CD4-positive, alpha-beta T cell (primary cell): ENCODE measurements at regions of chr2 and their contacts with region 1.

Region 1: DNA sequence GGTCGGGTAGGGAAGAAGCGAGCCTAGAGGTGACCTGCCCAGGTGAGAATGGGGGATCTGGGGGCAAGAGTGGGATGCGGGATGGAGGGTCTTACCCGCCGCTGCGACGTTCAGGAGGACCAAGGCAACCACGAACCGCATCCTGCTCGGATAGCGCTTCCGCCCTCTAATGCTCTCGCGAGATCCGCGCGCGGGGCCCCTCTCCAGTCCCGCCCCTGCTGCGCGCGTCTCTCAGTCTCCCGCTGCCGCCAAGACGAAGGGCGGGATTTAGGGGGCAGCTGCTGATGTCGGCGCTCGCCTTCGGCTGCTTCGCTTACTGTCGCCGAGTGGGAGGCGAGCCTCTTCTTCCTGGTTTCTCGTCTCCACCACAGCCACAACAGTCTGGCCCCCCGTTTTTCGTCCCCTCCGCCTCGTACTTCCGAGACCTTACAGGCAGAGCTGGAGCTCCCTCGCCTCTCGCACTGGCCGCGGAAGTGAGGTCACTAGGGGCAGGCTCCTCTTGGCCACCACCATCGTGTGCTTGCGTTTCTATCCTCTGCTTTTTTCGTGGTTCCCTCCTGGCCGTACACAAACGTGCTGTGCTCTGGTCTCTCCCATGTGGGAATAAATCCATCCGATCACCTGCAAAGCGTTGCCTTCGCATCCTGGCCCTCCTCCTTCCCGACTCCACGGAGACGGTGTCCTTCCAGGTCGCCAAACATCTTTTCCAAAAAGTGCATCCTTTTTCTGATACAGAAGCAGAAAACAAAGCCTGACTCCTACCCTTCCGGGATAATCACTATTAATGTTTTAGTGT is at the start of gene TGOLN2:
- DNase-seq: peak; percentile 88 to 96 (median 94)
- ATAC-seq: peak; percentile 84
- H3K4me3 ChIP-seq: peak within 1 kb of the TSS; percentile 89
- H3K4me3 Mint-ChIP-seq: peak within 1 kb of the TSS; percentile 96
- H3K27ac ChIP-seq: peak within 1 kb of the TSS; percentile 95 to 97
- H3K27ac Mint-ChIP-seq: peak within 1 kb of the TSS; percentile 97
- H3K4me1 ChIP-seq: peaks cover 35% of the 10 kb centered on the region
- H3K4me1 Mint-ChIP-seq: peaks cover 54% of the 10 kb centered on the region
- H3K27me3 ChIP-seq: no peaks in the 10 kb centered on the region
- H3K27me3 Mint-ChIP-seq: no peaks in the 10 kb centered on the region
- CTCF ChIP-seq: no peak
- total RNA-seq, gene TGOLN2: 172 to 175 TPM

Region 2: GRCh38 chr2:84970868-84971509 is 357.0 kb before region 1 on chr2 and contains the start of gene KCMF1:
- CTCF ChIA-PET with region 1: no interaction called
- POLR2A ChIA-PET with region 1: interaction called, 11 read pairs
- intact Hi-C with region 1: no loop called
- DNase-seq: peak; percentile 44 to 82 (median 63)
- ATAC-seq: peak; percentile 49
- H3K4me3 ChIP-seq: peak within 1 kb of the TSS; percentile 99
- H3K4me3 Mint-ChIP-seq: peak within 1 kb of the TSS; percentile 99
- H3K27ac ChIP-seq: peak within 1 kb of the TSS; percentile 84 to 91
- H3K27ac Mint-ChIP-seq: peak within 1 kb of the TSS; percentile 98
- H3K4me1 ChIP-seq: peaks cover 28% of the 10 kb centered on the region
- H3K4me1 Mint-ChIP-seq: peaks cover 61% of the 10 kb centered on the region
- H3K27me3 ChIP-seq: no peaks in the 10 kb centered on the region
- H3K27me3 Mint-ChIP-seq: no peaks in the 10 kb centered on the region
- CTCF ChIP-seq: no peak
- total RNA-seq, gene KCMF1: 72.4 to 78.0 TPM

Region 3: DNA sequence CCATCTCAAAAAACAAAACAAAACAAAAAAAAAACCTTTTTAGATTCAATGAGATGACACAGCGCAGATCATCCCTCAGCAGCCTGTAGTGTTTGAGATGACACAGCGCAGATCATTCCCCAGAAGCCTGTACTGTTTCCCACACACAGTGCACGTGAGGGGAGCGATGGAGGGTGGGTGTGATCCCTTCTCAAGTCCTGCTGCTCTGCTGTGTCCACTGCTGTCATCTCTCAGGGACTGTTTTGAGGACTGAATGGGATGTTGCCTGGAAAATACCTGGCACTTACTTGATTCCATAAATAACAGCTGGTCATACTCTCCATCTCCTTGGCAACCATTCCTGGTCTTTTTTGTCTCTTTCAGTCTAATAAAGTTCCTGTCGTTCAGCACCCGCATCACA is 25.9 kb before region 1 on chr2:
- CTCF ChIA-PET with region 1: interaction called, 5 read pairs
- POLR2A ChIA-PET with region 1: interaction called, 24 read pairs
- intact Hi-C with region 1: no loop called
- DNase-seq: no peak
- ATAC-seq: no peak
- H3K4me3 ChIP-seq: no peak overlapping the region
- H3K4me3 Mint-ChIP-seq: no peak overlapping the region
- H3K27ac ChIP-seq: no peak overlapping the region
- H3K27ac Mint-ChIP-seq: no peak overlapping the region
- H3K4me1 ChIP-seq: peaks cover 16% of the 10 kb centered on the region
- H3K4me1 Mint-ChIP-seq: peaks cover 13% of the 10 kb centered on the region
- H3K27me3 ChIP-seq: no peaks in the 10 kb centered on the region
- H3K27me3 Mint-ChIP-seq: peaks cover 4% of the 10 kb centered on the region
- CTCF ChIP-seq: no peak

Region 4: DNA sequence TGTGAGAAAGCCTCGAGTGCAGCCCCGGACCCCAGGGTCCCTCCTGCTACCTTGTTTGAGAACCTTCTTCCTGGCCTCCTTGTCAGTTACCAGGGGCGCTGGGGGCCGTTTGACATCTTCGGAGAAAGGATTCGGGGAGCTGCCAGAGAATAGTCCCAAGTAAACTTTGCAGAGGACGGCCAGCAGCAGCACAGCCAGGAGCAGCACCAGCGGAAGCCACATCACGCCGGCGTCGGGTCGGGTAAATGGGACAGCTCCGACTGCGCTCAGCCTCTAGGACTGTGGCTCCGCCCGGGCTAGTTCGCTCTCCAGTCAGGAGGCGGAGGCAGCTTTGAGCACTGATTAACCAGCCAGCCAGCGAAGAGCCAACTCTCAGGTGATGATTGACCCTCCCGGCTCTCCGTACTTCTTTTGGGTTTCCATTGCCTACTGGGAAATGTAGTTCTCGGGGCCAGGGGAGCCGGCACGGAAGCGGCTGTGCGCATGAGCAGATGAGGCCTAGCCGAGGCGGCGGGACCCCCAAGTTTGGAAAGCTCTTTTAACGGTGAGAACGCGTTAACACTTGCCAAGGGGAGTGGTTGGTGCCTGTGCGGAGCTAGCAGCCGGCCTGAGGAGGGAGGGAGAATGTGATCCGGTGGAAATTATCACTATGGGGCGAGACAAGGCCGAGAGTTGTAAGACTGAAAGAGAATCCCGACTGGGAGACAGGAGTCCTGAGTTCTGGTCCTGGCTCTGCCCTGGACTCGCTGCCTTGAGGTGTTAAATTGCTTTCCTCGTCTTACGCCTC is 26.5 kb after region 1 on chr2 and contains the starts of genes ELMOD3 and RETSAT:
- CTCF ChIA-PET with region 1: interaction called, 3 read pairs
- POLR2A ChIA-PET with region 1: interaction called, 216 read pairs
- intact Hi-C with region 1: loop called (anchors 1 kb)
- DNase-seq: peak; percentile 89 to 99 (median 94)
- ATAC-seq: peak; percentile 98
- H3K4me3 ChIP-seq: peak within 1 kb of the TSS; percentile 68
- H3K4me3 Mint-ChIP-seq: peak within 1 kb of the TSS; percentile 99
- H3K27ac ChIP-seq: peak within 1 kb of the TSS; percentile 75
- H3K27ac Mint-ChIP-seq: peak within 1 kb of the TSS; percentile 94
- H3K4me1 ChIP-seq: peaks cover 44% of the 10 kb centered on the region
- H3K4me1 Mint-ChIP-seq: peaks cover 63% of the 10 kb centered on the region
- H3K27me3 ChIP-seq: no peaks in the 10 kb centered on the region
- H3K27me3 Mint-ChIP-seq: no peaks in the 10 kb centered on the region
- CTCF ChIP-seq: no peak
- total RNA-seq, gene ELMOD3: 13.5 to 15.3 TPM
- total RNA-seq, gene RETSAT: 19.2 to 22.2 TPM

Region 5: GRCh38 chr2:85420536-85421259 is 92.7 kb after region 1 on chr2:
- CTCF ChIA-PET with region 1: no interaction called
- POLR2A ChIA-PET with region 1: interaction called, 25 read pairs
- intact Hi-C with region 1: loop called in 1 of 2 experiments (anchors 2 kb)
- DNase-seq: peak; percentile 78 to 96 (median 88)
- ATAC-seq: peak; percentile 68
- H3K4me3 ChIP-seq: peak overlapping the region; percentile 4
- H3K4me3 Mint-ChIP-seq: peak overlapping the region; percentile 80
- H3K27ac ChIP-seq: no peak overlapping the region
- H3K27ac Mint-ChIP-seq: peak overlapping the region; percentile 14
- H3K4me1 ChIP-seq: peaks cover 33% of the 10 kb centered on the region
- H3K4me1 Mint-ChIP-seq: peaks cover 24% of the 10 kb centered on the region
- H3K27me3 ChIP-seq: no peaks in the 10 kb centered on the region
- H3K27me3 Mint-ChIP-seq: no peaks in the 10 kb centered on the region
- CTCF ChIP-seq: peak; percentile 99

Region 6: DNA sequence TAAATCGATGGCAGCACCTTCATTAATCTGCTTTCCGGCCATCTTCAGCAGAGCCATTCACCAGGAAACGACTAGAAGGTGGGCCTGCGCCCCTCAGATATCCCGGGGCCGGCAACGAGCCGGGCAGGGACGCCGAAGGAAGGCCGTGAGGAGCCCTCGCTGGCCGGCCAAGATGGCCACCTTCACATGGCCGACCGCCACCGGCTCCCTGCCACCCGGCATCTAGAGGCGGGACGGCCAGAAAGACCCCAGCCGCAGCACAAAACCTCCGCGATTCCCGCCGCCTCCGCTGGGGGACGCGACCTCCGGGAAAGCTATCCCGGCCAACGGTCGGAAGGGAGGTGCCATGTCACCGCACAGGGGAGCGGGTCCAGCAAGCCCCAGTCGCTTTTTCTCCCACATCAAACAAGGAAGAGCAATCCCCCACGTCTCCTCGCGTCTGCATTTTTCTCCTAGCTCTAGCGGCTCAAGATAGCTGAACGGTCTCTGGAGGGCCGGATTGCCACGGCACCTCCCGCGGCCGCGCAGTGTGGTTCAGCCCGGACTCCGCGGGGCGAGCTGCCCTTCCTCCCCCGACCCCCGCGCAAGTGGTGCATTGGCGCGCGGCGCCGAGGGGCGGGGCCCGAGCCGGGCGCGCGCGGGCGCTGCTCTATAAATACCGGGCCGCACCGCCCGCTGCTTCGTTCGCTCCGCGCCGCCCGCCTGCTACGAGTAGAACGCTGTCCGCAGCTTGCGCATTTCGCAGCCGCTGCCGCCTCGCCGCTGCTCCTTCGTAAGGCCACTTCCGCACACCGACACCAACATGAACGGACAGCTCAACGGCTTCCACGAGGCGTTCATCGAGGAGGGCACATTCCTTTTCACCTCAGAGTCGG is 210.7 kb after region 1 on chr2 and contains the start of gene MAT2A:
- CTCF ChIA-PET with region 1: no interaction called
- POLR2A ChIA-PET with region 1: interaction called, 63 read pairs
- intact Hi-C with region 1: loop called in 1 of 2 experiments (anchors 5 kb)
- DNase-seq: peak; percentile 65 to 92 (median 86)
- ATAC-seq: peak; percentile 71
- H3K4me3 ChIP-seq: peak within 1 kb of the TSS; percentile 97
- H3K4me3 Mint-ChIP-seq: peak within 1 kb of the TSS; percentile 94
- H3K27ac ChIP-seq: peak within 1 kb of the TSS; percentile 80 to 84
- H3K27ac Mint-ChIP-seq: peak within 1 kb of the TSS; percentile 92
- H3K4me1 ChIP-seq: peaks cover 29% of the 10 kb centered on the region
- H3K4me1 Mint-ChIP-seq: peaks cover 52% of the 10 kb centered on the region
- H3K27me3 ChIP-seq: no peaks in the 10 kb centered on the region
- H3K27me3 Mint-ChIP-seq: no peaks in the 10 kb centered on the region
- CTCF ChIP-seq: peak; percentile 47
- total RNA-seq, gene MAT2A: 121 to 122 TPM

Region 7: GRCh38 chr2:85595301-85596025 is 267.4 kb after region 1 on chr2 and contains the start of gene RNF181:
- CTCF ChIA-PET with region 1: no interaction called
- POLR2A ChIA-PET with region 1: interaction called, 12 read pairs
- intact Hi-C with region 1: no loop called
- DNase-seq: peak; percentile 75 to 97 (median 85)
- ATAC-seq: peak; percentile 99
- H3K4me3 ChIP-seq: peak within 1 kb of the TSS; percentile 94
- H3K4me3 Mint-ChIP-seq: peak within 1 kb of the TSS; percentile 94
- H3K27ac ChIP-seq: peak within 1 kb of the TSS; percentile 78 to 86
- H3K27ac Mint-ChIP-seq: peak within 1 kb of the TSS; percentile 98
- H3K4me1 ChIP-seq: peaks cover 41% of the 10 kb centered on the region
- H3K4me1 Mint-ChIP-seq: peaks cover 35% of the 10 kb centered on the region
- H3K27me3 ChIP-seq: no peaks in the 10 kb centered on the region
- H3K27me3 Mint-ChIP-seq: no peaks in the 10 kb centered on the region
- CTCF ChIP-seq: no peak
- total RNA-seq, gene RNF181: 41.5 to 43.8 TPM